Activated CD4-positive, alpha-beta memory T cell treated with anti-CD3 and anti-CD28 coated beads, Interleukin-2, amount 10 ng/mL, durations not matched to agents 7 days and 5 days (primary cell): ENCODE measurements at regions of chr1 and their contacts with region 1.

Region 1: GRCh38 chr1:183306317-183307042 is 111.7 kb downstream of the NMNAT2 start:
- DNase-seq: no peak
- H3K4me3 Mint-ChIP-seq: no peak overlapping the region
- H3K27ac Mint-ChIP-seq: no peak overlapping the region
- H3K4me1 Mint-ChIP-seq: no peaks in the 10 kb centered on the region
- H3K27me3 Mint-ChIP-seq: peaks cover 6% of the 10 kb centered on the region

Region 2: GRCh38 chr1:183281553-183282091 is 24.9 kb before region 1 on chr1:
- CTCF ChIA-PET with region 1: interaction called, 11 read pairs
- POLR2A ChIA-PET with region 1: no interaction called
- DNase-seq: peak; percentile 78
- H3K4me3 Mint-ChIP-seq: no peak overlapping the region
- H3K27ac Mint-ChIP-seq: no peak overlapping the region
- H3K4me1 Mint-ChIP-seq: peaks cover 29% of the 10 kb centered on the region
- H3K27me3 Mint-ChIP-seq: peaks cover 10% of the 10 kb centered on the region